BJ (cell line): ENCODE measurements at regions of chr6 and their contacts with region 1.

Region 1: DNA sequence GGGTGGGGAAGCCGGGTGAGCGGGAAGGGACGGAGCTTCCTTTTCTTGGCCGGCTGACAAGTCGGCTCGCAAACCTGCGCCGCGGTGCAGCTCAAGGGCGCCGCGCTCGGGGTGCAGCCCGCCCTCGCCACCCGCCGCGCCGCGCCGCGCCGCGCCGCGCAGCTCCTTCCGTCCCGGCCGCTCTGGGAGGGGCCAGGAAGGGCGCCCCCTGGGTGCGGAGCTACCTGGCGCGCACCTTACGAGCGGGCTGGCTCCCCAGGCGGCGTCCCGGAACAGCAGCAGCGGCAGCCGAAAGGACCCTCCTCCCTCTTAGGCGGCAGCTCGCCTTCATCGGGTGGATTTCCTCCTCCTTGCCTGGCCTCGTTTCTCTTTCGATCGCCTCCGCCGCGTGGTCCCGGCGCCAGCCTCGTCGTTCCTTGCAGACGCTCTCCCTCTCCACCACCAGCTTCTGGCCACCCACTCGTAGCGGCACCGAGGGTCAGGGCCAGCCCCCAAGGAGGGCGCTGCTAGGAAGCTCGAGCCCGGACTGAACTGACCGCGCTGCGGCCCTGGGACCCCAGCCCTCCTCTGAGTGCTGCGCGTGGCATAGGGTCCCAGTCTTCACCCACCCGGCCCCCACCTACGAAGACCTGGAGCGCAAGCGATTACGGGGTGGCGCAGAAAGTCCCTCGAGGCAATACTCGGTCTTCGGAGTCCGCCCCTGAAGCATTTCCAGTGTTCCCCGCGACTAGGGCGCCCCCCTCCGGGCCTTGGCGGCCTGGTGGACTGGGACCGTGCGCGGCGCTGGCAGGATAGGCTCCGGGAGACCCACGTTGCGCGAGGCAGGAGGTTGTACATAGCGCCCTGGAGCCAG is at the start of gene MAP3K5:
- DNase-seq: peak; percentile 22
- H3K4me3 ChIP-seq: peak within 1 kb of the TSS; percentile 98
- H3K27me3 ChIP-seq: no peaks in the 10 kb centered on the region
- CTCF ChIP-seq: peak; percentile 95
- polyA plus RNA-seq, gene MAP3K5: 2.2 and 2.5 TPM in 2 replicates

Region 2: DNA sequence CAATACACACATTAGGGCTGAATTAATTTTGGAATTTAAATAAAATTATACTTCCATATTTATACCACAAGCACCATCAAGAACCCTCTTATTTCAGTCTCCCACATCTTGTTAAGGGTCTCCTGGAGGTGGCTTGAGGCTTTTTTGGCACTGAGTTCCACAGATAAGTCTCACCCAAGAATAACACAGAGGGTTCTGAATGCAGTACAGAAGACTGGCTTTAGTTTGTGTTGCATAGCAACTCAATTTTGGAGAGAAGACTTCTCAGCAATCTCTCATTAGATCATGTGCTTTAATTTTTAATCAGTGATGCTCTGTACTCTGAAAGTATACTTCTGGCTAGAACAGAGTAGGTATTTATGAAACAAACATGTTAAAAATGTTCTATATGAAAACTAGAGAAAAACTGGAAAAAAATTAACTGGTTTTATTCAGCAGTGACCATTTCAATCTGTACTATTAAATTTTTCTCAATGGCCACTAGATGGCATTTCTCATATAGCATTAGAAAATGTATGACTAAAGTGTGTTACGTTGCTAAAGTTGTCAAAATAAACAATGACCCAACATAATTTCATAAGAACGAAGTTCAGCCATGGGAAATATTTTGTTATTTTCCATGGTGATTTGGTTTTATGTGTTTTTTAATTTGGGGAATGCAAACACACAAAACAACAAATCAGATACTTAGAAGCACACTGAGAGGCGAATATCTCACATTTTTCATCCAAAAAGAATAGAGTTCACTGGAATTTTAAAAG is 209.7 kb before region 1 on chr6:
- CTCF ChIA-PET with region 1: interaction called, 26 read pairs
- POLR2A ChIA-PET with region 1: no interaction called
- DNase-seq: peak; percentile 83
- H3K4me3 ChIP-seq: no peak overlapping the region
- H3K27me3 ChIP-seq: no peaks in the 10 kb centered on the region
- CTCF ChIP-seq: peak; percentile 49

Region 3: DNA sequence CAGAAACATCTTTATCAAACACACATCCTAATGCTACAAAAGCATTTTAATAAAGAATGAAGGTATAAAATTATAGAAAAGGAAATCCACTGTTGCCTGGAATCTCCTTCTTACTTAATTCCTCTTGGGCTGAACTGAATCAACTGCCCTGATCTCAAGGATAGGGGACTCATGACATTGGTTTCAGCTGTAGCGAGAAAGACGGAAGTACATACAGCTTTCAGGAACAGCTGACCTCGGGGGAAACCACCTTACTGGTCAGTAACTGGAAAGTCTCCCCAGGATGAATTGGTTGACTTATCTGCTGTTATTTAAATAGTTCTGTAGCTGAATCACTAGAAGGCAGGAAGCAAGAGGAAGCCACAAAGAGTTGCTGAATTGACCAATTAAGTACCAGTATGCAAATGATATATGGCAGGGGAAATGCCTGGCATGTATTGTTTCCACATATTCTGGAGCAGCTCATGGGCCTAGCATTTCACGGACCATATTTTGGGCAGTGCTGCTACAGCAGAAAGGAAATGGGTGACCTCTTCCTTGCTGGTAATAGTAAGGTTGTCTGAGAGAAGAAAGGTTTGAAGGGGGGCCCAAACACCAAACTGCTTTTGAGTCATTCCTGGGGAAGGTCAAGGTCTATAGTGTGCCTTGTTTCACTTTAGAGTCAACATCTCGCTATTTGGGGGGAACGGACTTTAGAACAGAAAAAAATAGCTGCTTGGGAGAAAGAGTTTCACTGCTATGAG is 198.7 kb before region 1 on chr6:
- CTCF ChIA-PET with region 1: interaction called, 12 read pairs
- POLR2A ChIA-PET with region 1: no interaction called
- DNase-seq: peak; percentile 97
- H3K4me3 ChIP-seq: no peak overlapping the region
- H3K27me3 ChIP-seq: no peaks in the 10 kb centered on the region
- CTCF ChIP-seq: no peak

Region 4: GRCh38 chr6:136803608-136804007 is 11.0 kb after region 1 on chr6:
- CTCF ChIA-PET with region 1: interaction called, 15 read pairs
- POLR2A ChIA-PET with region 1: no interaction called
- DNase-seq: no peak
- H3K4me3 ChIP-seq: no peak overlapping the region
- H3K27me3 ChIP-seq: no peaks in the 10 kb centered on the region
- CTCF ChIP-seq: no peak